Endothelial cell of umbilical vein (primary cell): ENCODE measurements at regions of chr22 and their contacts with region 1.

Region 1: GRCh38 chr22:20437613-20438426 is at the start of gene SCARF2:
- DNase-seq: peak; percentile 52
- H3K4me3 ChIP-seq: peak within 1 kb of the TSS; percentile 43 to 75 (median 59)
- H3K27ac ChIP-seq: peak within 1 kb of the TSS; percentile 4
- H3K4me1 ChIP-seq: peaks cover 11% of the 10 kb centered on the region
- H3K27me3 ChIP-seq: no peaks in the 10 kb centered on the region
- CTCF ChIP-seq: no peak
- POLR2A ChIP-seq: no peak
- total RNA-seq, gene SCARF2: 18.4 and 20.1 TPM in 2 replicates

Region 2: GRCh38 chr22:20424932-20425587 is 12.8 kb before region 1 on chr22:
- CTCF ChIA-PET with region 1: no interaction called
- POLR2A ChIA-PET with region 1: no interaction called
- dilution Hi-C with region 1: no loop called
- intact Hi-C with region 1: no loop called
- DNase-seq: no peak
- H3K4me3 ChIP-seq: no peak overlapping the region
- H3K27ac ChIP-seq: no peak overlapping the region
- H3K4me1 ChIP-seq: no peaks in the 10 kb centered on the region
- H3K27me3 ChIP-seq: no peaks in the 10 kb centered on the region
- CTCF ChIP-seq: no peak
- POLR2A ChIP-seq: no peak

Region 3: GRCh38 chr22:20495861-20496681 is 58.3 kb after region 1 on chr22:
- CTCF ChIA-PET with region 1: interaction called, 3 read pairs
- POLR2A ChIA-PET with region 1: no interaction called
- dilution Hi-C with region 1: no loop called
- intact Hi-C with region 1: loop called (anchors 5 kb)
- DNase-seq: peak; percentile 91
- H3K4me3 ChIP-seq: peak overlapping the region; percentile 62 to 77 (median 74)
- H3K27ac ChIP-seq: peak overlapping the region; percentile 85
- H3K4me1 ChIP-seq: peaks cover 12% of the 10 kb centered on the region
- H3K27me3 ChIP-seq: no peaks in the 10 kb centered on the region
- CTCF ChIP-seq: peak; percentile 87 to 91
- POLR2A ChIP-seq: peak; percentile 93